ENCODE measurements at regions of chr1 and their contacts with region 1.

Region 1: GRCh38 chr1:115717541-115717940 is 51.0 kb downstream of the CASQ2 start:
- DNase-seq: peak in 7 of 10 donors; percentile 30 to 87 (median 47)

Region 2: GRCh38 chr1:115624859-115625258 is 92.7 kb before region 1 on chr1:
- intact Hi-C with region 1: no loop called
- DNase-seq: no peak

Region 3: GRCh38 chr1:115761601-115762302 is 44.2 kb after region 1 on chr1:
- intact Hi-C with region 1: no loop called
- DNase-seq: no peak

Region 4: DNA sequence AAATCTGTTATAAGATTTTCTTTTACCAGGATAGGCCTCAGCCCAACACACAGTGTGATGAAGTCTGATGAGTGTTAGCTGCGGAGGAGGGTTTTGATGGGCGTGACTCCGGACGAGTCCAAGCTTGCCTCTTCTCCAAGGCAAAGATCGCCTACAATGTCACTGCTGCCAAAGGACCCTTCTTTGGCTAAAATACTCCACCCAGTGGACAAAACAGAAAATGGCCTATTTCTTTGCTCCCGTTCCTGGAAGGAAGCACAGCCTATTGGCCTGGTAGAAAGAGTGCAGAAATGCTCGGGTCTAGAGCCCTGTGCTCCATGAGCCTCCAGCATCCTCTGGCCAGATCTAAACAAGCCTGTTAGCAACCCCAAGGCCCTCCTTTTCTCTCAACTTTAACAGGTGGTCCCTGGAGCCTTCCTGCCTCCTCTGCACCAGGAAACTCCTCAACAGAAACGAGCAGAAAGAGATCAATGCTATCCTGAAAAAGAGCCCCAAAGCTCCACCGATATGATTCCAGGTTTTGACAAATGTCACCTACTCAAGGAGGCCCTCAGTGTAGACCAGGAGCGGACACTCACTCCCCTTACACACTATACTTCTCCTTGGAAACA is 54.4 kb after region 1 on chr1:
- intact Hi-C with region 1: loop called (anchors 5 kb)
- DNase-seq: peak in 4 of 10 donors; percentile 25 to 39 (median 34)

Region 5: DNA sequence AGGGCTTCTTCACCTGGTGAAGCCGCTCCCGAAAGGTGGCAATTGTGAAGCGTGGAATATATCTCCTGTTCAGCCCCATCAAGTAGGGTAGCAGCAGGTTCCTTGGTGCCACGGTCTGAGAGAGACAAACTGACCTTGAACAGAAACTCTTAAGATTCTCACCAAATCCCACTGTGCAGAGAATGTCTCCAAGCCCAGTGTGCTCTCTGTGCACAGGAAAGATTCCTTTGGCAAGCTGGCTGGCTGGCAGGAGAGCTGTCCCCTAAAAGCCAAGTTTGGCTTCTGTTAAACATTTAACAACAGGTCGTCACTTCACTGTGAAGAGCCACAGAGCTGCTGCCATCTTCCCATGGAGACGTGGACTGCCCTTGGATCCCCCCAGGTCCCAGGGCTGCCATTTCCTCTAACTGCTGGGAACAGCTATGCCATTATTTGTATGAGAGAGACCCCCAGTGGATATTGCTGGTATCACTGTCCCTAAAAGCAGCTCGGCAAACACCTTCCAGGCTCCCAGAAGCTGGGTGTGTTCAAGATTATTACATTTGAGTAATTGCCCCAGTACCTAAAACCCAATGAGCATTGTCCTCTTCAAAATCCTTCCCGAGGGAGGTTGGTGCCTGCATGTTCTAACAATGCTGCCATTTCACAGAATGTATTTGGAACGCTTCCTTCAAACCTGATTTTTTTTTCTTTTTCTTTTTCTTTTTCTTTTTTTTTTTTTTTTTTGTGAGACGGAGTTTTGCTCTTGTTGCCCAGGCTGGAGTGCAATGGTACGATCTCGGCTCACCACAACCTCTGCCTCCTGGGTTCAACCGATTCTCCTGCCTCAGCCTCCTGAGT is 781.5 kb after region 1 on chr1:
- intact Hi-C with region 1: loop called (anchors 5 kb)
- DNase-seq: peak in 7 of 10 donors; percentile 41 to 92 (median 60)

Measured in posterior cingulate gyrus (tissue), 11 donors.